Activated B cell treated with CpG ODN at 0.5 μM for 24 hours (primary cell): ENCODE measurements at regions of chr1 and their contacts with region 1.

Region 1: DNA sequence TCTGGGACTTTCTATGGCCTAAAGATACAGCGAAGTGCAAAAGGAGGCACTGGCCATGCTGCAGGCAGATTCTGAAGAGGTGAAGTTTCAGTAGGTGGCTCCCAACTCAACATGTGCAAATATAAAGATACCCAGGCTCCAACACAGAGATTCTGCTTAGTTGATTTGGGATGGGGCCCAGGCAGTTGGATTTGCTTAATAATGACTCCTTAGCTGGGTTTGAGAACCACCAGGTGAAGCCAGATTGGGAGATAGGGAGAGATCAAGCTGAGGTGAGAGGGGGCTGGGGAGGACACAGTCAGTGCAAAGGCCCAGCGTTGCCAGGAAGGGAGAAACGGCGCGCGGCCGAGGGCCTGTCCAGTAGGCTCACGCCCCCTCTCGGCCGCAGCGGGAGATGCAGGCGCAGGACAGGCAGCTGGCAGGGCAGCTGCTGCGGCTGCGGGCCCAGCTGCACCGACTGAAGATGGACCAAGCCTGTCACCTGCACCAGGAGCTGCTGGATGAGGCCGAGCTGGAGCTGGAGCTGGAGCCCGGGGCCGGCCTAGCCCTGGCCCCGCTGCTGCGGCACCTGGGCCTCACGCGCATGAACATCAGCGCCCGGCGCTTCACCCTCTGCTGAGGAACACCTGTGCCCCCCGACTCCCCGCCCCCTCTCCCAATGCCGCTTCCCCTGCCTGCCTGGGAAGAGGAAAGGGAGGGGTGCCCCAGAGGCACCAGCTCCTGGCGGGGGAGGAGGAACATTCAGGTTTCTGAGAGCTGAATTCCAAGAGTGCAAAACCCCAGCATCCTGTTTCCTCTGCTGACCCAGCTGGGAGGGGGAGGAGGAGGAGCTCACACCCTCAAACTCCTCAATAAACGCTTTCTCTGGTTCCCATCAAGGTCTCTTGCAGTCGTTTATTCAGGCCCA is 1.2 kb downstream of the FAM167B start:
- DNase-seq: peak; percentile 71
- ATAC-seq: peak; percentile 13
- H3K4me3 Mint-ChIP-seq: peak overlapping the region; percentile 45
- H3K27ac Mint-ChIP-seq: peak overlapping the region; percentile 81
- H3K4me1 Mint-ChIP-seq: peaks cover 70% of the 10 kb centered on the region
- H3K27me3 Mint-ChIP-seq: no peaks in the 10 kb centered on the region
- CTCF ChIP-seq: no peak

Region 2: DNA sequence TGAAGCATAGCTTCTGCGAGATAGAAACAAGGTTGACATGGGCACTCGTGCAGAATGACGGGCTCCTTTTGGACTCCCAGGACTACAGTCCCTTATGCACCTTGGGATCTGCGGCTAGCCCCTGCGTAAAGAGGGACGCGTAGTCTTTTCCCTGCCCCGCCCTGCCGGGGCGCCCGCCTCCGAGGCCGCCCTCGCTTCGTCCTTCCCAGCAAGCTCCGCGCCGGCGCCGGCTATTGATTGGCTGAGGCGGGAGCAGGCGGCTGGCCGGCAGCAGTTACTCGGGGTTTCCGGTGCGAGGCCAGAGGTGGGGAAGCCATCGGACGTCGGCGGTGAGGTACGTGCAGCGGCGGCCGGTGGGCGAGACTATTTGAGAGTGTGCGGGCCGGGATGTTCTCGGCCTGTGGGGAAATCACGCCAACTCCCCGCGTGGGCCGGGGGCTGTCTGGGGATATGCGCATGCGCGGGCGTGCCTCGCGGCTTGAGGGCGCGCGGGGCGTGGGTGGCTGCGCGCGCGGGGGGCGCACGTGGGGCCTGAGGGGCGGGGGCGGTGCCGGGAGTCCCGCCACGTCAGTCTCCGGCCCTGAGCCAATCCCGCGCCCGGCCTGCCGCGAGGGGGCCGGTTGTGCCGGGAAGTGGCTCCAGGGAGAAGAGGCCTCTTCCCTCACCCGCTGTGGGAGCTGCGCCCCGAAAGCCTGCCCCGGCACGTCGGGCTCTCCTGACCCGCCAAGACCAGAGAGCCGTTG is 68.6 kb before region 1 on chr1 and contains the start of gene TXLNA:
- CTCF ChIA-PET with region 1: interaction called, 6 read pairs
- POLR2A ChIA-PET with region 1: interaction called, 12 read pairs
- intact Hi-C with region 1: no loop called
- DNase-seq: peak; percentile 89
- ATAC-seq: peak; percentile 91
- H3K4me3 Mint-ChIP-seq: peak within 1 kb of the TSS; percentile 90
- H3K27ac Mint-ChIP-seq: peak within 1 kb of the TSS; percentile 98
- H3K4me1 Mint-ChIP-seq: peaks cover 40% of the 10 kb centered on the region
- H3K27me3 Mint-ChIP-seq: no peaks in the 10 kb centered on the region
- CTCF ChIP-seq: no peak
- total RNA-seq, gene TXLNA: 52.0 and 54.1 TPM in 2 replicates

Region 3: GRCh38 chr1:32200226-32201010 is 47.8 kb before region 1 on chr1 and contains the start of gene CCDC28B:
- CTCF ChIA-PET with region 1: interaction called, 7 read pairs
- POLR2A ChIA-PET with region 1: interaction called, 7 read pairs
- intact Hi-C with region 1: loop called (anchors 2 kb)
- DNase-seq: peak; percentile 62
- ATAC-seq: peak; percentile 51
- H3K4me3 Mint-ChIP-seq: peak within 1 kb of the TSS; percentile 87
- H3K27ac Mint-ChIP-seq: peak within 1 kb of the TSS; percentile 87
- H3K4me1 Mint-ChIP-seq: peaks cover 49% of the 10 kb centered on the region
- H3K27me3 Mint-ChIP-seq: no peaks in the 10 kb centered on the region
- CTCF ChIP-seq: no peak
- total RNA-seq, gene CCDC28B: 50.4 and 56.9 TPM in 2 replicates

Region 4: GRCh38 chr1:32221980-32222755 is 26.1 kb before region 1 on chr1 and contains the starts of genes EIF3I and TMEM234:
- CTCF ChIA-PET with region 1: interaction called, 47 read pairs
- POLR2A ChIA-PET with region 1: interaction called, 47 read pairs
- intact Hi-C with region 1: loop called (anchors 2 kb)
- DNase-seq: peak; percentile 80
- ATAC-seq: peak; percentile 85
- H3K4me3 Mint-ChIP-seq: peak within 1 kb of the TSS; percentile 96
- H3K27ac Mint-ChIP-seq: peak within 1 kb of the TSS; percentile 95
- H3K4me1 Mint-ChIP-seq: peaks cover 50% of the 10 kb centered on the region
- H3K27me3 Mint-ChIP-seq: no peaks in the 10 kb centered on the region
- CTCF ChIP-seq: no peak
- total RNA-seq, gene EIF3I: 196 and 213 TPM in 2 replicates
- total RNA-seq, gene TMEM234: 31.8 and 35.5 TPM in 2 replicates

Region 5: DNA sequence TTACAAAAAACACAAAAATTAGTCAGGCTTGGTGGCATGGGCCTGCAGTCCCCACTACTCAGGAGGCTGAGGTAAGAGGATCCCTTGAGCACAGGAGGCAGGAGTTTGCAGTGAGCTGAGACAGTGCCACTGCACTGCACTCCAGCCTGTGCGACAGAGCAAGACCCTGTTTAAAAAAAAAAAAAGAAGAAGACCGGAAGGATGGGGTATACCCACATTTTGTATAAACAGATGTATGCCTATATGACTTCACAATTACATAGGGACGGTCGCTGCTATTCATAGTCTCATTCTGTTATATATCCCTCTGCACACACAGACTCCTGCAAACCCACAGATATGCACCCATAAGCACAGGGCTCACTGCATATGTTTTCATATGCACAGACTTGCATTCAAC is 15.5 kb after region 1 on chr1:
- CTCF ChIA-PET with region 1: interaction called, 5 read pairs
- POLR2A ChIA-PET with region 1: interaction called, 31 read pairs
- intact Hi-C with region 1: loop called (anchors 2 kb)
- DNase-seq: no peak
- ATAC-seq: peak; percentile 85
- H3K4me3 Mint-ChIP-seq: peak overlapping the region; percentile 1
- H3K27ac Mint-ChIP-seq: no peak overlapping the region
- H3K4me1 Mint-ChIP-seq: peaks cover 34% of the 10 kb centered on the region
- H3K27me3 Mint-ChIP-seq: no peaks in the 10 kb centered on the region
- CTCF ChIP-seq: no peak

Region 6: DNA sequence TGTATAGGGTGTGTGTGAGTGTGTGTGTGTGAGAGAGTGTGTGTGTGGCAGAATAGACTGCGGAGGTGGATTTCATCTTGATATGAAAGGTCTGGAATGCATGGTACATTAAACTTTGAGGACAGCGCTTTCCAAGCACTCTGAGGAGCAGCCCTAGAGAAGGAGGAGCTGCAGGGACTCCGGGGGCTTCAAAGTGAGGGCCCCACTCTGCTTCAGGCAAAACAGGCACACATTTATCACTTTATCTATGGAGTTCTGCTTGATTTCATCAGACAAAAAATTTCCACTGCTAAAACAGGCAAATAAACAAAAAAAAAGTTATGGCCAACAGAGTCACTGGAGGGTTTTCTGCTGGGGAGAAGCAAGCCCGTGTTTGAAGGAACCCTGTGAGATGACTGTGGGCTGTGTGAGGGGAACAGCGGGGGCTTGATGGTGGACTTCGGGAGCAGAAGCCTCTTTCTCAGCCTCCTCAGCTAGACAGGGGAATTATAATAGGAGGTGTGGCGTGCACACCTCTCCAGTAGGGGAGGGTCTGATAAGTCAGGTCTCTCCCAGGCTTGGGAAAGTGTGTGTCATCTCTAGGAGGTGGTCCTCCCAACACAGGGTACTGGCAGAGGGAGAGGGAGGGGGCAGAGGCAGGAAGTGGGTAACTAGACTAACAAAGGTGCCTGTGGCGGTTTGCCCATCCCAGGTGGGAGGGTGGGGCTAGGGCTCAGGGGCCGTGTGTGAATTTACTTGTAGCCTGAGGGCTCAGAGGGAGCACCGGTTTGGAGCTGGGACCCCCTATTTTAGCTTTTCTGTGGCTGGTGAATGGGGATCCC is 25.4 kb after region 1 on chr1:
- CTCF ChIA-PET with region 1: interaction called, 6 read pairs
- POLR2A ChIA-PET with region 1: interaction called, 12 read pairs
- intact Hi-C with region 1: no loop called
- DNase-seq: no peak
- ATAC-seq: peak; percentile 72
- H3K4me3 Mint-ChIP-seq: peak overlapping the region; percentile 61
- H3K27ac Mint-ChIP-seq: peak overlapping the region; percentile 83
- H3K4me1 Mint-ChIP-seq: peaks cover 33% of the 10 kb centered on the region
- H3K27me3 Mint-ChIP-seq: no peaks in the 10 kb centered on the region
- CTCF ChIP-seq: no peak

Region 7: GRCh38 chr1:32394141-32394889 is 146.1 kb after region 1 on chr1 and contains the start of gene BSDC1:
- CTCF ChIA-PET with region 1: interaction called, 3 read pairs
- POLR2A ChIA-PET with region 1: interaction called, 8 read pairs
- intact Hi-C with region 1: loop called (anchors 1 kb)
- DNase-seq: peak; percentile 97
- ATAC-seq: peak; percentile 99
- H3K4me3 Mint-ChIP-seq: peak within 1 kb of the TSS; percentile 100
- H3K27ac Mint-ChIP-seq: peak within 1 kb of the TSS; percentile 98
- H3K4me1 Mint-ChIP-seq: peaks cover 27% of the 10 kb centered on the region
- H3K27me3 Mint-ChIP-seq: no peaks in the 10 kb centered on the region
- CTCF ChIP-seq: no peak
- total RNA-seq, gene BSDC1: 51.8 and 72.2 TPM in 2 replicates

Region 8: DNA sequence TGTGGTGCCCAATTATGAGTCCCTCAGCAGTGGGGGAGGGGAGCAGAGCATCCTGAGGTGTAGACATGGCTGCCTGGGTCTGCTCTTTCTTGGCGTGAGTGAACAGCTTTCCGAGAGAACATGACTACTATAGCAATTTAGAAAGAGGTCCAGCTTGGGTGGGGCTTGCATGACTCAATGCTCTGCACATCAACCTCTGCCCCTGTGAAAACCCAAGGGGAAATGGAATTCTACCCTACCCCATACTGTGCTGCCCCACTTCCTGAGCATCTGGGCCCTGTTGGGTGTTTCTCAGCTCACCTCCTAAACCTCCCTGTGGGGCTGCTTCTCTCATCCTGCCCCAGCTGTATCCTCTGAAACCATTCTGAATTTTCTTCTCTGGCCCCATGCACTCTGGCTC is 824.5 kb after region 1 on chr1:
- CTCF ChIA-PET with region 1: no interaction called
- POLR2A ChIA-PET with region 1: no interaction called
- intact Hi-C with region 1: no loop called
- DNase-seq: no peak
- ATAC-seq: no peak
- H3K4me3 Mint-ChIP-seq: no peak overlapping the region
- H3K27ac Mint-ChIP-seq: no peak overlapping the region
- H3K4me1 Mint-ChIP-seq: no peaks in the 10 kb centered on the region
- H3K27me3 Mint-ChIP-seq: peaks cover 2% of the 10 kb centered on the region
- CTCF ChIP-seq: no peak